Activated CD4-positive, alpha-beta memory T cell treated with anti-CD3 and anti-CD28 coated beads for 36 hours (primary cell): ENCODE measurements at regions of chr10 and their contacts with region 1.

Region 1: DNA sequence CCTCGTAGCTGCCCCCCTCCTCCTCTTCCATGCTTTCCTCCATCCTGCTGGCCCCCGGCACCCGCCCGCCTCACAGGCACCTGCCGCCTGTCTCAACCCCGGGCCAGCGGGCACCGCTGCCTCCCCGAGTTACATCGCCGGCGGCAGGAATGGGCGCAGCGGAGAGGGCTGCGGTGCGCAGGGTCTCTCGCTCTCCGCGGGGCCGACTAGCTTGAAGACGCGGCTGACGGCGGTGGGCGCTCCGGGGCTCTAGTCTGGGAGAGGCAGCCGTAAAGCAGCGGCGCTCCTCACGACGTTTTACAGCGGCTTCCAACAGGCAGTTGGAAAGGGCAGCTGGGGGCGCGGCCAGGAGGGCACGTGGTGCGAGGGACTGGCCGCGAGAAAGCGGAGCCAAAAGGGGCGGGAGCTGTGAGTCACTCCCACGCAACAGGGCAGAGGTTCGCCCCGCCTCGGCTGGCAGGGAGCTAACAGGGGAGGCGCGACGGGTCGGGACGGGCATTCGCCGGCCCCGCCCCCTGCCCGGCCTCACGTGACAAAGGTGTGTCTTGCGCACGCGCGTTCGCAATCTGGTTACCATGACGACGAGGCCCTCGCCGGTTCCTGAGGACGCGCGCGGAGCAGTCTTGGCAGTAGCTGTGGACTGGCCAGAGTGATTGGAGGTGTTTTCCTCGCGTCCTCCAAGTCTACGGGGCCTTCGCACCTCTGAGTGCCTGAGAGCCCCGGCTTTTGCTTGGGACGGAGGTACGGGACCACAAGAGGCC is at the start of gene CACUL1:
- DNase-seq: peak; percentile 100
- H3K4me3 Mint-ChIP-seq: peak within 1 kb of the TSS; percentile 91
- H3K27ac Mint-ChIP-seq: peak within 1 kb of the TSS; percentile 83
- H3K4me1 Mint-ChIP-seq: peaks cover 34% of the 10 kb centered on the region
- H3K27me3 Mint-ChIP-seq: peaks cover 6% of the 10 kb centered on the region
- total RNA-seq, gene CACUL1: 24.0 to 24.4 TPM

Region 2: GRCh38 chr10:118046395-118047156 is 708.3 kb before region 1 on chr10 and contains the start of gene RAB11FIP2:
- CTCF ChIA-PET with region 1: no interaction called
- POLR2A ChIA-PET with region 1: no interaction called
- intact Hi-C with region 1: loop called (anchors 2 kb)
- DNase-seq: peak; percentile 96
- H3K4me3 Mint-ChIP-seq: peak within 1 kb of the TSS; percentile 89
- H3K27ac Mint-ChIP-seq: peak within 1 kb of the TSS; percentile 56
- H3K4me1 Mint-ChIP-seq: peaks cover 36% of the 10 kb centered on the region
- H3K27me3 Mint-ChIP-seq: no peaks in the 10 kb centered on the region
- total RNA-seq, gene RAB11FIP2: 7.5 to 9.4 TPM

Region 3: DNA sequence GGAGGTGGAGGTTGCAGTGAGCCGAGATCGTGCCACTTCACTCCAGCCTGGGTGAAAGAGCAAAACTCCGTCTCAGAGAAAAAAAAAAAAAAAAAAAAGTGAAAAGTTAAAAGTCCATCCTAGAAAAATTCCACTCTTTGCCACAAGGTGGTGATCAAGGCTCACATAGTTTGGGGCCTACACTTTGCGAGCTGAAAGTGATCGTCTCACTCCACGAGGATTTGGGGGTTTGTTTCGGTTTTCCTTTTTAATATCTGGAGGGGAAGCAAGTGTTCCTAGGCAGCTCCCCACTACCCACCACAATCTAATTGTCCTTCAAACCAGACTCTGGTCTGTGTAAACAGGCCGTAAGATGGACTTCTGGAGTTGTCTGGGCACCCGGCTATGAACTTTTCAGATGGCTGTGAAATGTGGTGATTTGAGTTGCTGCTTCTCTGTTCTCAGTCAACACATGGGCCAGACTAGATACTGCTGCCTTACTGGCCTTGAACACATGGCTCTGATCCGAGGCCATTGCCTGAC is 186.5 kb before region 1 on chr10:
- CTCF ChIA-PET with region 1: interaction called, 10 read pairs
- POLR2A ChIA-PET with region 1: no interaction called
- intact Hi-C with region 1: no loop called
- DNase-seq: peak; percentile 45
- H3K4me3 Mint-ChIP-seq: no peak overlapping the region
- H3K27ac Mint-ChIP-seq: no peak overlapping the region
- H3K4me1 Mint-ChIP-seq: peaks cover 2% of the 10 kb centered on the region
- H3K27me3 Mint-ChIP-seq: no peaks in the 10 kb centered on the region

Region 4: GRCh38 chr10:118729641-118730258 is 25.1 kb before region 1 on chr10:
- CTCF ChIA-PET with region 1: interaction called, 10 read pairs
- POLR2A ChIA-PET with region 1: no interaction called
- intact Hi-C with region 1: loop called (anchors 1 kb)
- DNase-seq: no peak
- H3K4me3 Mint-ChIP-seq: no peak overlapping the region
- H3K27ac Mint-ChIP-seq: peak overlapping the region; percentile 23
- H3K4me1 Mint-ChIP-seq: peaks cover 52% of the 10 kb centered on the region
- H3K27me3 Mint-ChIP-seq: no peaks in the 10 kb centered on the region

Region 5: DNA sequence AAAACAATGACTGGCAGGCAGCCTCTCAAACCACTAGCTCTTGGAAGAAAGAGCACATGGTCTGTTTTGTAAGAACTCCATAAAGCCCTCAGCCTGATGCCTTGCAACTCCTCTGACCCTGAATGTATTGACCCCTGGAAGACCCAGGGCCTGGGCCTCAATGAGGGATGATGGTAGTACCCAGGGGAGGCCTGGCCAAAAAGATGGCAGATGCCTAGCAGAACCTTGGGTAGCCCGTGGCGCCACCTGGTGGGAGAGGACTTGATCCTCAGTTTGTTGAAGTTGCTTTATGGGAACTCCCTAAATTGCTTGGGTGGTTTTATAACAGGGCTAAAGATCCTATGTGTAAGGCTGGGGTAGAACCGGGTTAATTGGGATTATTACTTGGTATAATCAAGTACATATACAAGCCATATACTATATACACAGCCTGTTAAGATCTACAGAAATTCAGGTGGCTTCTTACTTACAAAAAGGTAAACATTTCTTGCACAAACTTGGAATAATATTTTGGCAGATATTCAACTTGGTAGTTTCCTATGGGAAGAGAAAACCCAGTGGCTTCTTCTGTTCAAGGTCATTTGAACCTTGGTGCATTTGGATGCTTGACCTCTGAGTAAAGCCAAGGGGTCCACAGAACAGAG is 95.6 kb after region 1 on chr10:
- CTCF ChIA-PET with region 1: no interaction called
- POLR2A ChIA-PET with region 1: no interaction called
- intact Hi-C with region 1: no loop called
- DNase-seq: peak; percentile 88
- H3K4me3 Mint-ChIP-seq: no peak overlapping the region
- H3K27ac Mint-ChIP-seq: no peak overlapping the region
- H3K4me1 Mint-ChIP-seq: no peaks in the 10 kb centered on the region
- H3K27me3 Mint-ChIP-seq: peaks cover 2% of the 10 kb centered on the region

Region 6: DNA sequence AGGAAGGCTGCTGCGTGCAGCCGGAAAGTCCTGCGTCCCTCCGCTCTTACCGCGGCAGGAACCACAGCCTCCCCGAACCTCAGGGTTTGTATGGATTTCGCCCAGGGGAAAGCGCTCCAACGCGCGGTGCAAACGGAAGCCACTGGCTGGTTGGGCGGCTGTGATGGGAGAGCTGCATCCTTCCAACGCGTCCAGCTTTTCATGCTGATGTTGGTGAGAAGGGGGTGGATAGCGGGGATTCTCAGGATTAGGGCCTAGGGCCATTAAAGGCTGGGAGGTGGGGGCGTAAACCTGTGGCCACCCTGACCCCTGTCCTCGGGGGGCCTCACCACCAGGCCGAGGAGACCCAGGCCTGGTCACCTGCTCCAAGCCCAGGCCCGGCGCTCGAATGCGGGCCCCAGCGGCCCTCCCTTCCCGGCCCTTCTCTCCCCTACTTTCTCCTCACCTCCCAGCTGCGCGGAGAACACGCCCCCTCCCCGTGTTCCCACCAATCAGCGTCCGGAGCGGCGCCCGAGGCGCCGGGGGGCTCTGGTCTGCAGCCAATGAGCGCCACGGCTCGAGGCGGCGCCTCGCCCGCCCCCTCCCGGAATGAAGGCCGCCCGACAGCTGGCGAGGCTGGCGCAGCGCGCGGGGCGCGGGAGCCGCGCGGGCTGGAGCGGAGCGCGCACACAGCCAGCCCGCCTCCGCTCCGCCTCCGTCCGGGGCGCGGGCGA is 274.2 kb after region 1 on chr10:
- CTCF ChIA-PET with region 1: no interaction called
- POLR2A ChIA-PET with region 1: interaction called, 5 read pairs
- intact Hi-C with region 1: loop called (anchors 10 kb)
- DNase-seq: peak; percentile 84
- H3K4me3 Mint-ChIP-seq: peak overlapping the region; percentile 48
- H3K27ac Mint-ChIP-seq: no peak overlapping the region
- H3K4me1 Mint-ChIP-seq: peaks cover 15% of the 10 kb centered on the region
- H3K27me3 Mint-ChIP-seq: no peaks in the 10 kb centered on the region

Region 7: DNA sequence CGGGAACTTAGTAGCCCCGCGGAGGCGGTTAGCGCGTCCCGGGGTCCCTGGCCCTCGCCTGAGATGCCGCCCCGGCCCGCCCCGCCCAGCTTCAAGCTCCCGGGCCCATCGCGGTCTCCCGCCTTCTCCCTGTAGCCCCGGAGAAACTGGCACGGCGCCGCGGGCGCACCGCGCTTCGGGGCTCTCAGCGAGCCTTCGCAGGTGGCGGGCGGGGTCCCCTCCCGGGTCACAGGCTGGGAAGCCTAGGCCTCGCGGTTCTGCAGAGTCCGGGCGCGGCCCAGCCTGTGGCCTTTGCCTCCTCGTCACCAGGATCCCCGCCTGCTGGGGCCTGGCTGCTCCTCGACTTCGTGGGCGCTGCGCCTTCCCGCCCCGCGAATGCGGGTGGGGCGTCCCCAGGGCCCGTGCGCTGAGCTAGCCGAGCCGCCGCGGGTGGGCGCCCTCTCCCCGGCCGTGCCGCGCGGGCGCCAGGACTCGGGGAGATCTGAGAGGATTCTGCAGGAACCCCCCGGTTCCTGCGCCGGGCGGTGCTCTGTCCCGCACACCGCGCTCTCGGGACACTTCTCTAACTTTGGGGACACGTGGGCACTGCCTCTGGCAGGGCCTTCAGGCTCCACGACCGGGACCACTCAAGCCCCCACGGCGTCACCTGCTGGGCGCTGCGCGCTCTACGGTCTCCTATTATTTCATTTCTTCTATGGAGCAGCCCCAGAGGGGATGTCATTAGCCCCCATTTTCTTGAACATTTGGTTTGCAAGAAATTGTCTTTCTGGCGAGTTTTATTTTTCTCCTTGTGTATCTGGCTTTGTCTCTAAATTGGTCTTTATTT is 788.3 kb after region 1 on chr10:
- CTCF ChIA-PET with region 1: no interaction called
- POLR2A ChIA-PET with region 1: interaction called, 4 read pairs
- intact Hi-C with region 1: loop called (anchors 5 kb)
- DNase-seq: peak; percentile 79
- H3K4me3 Mint-ChIP-seq: peak overlapping the region; percentile 81
- H3K27ac Mint-ChIP-seq: peak overlapping the region; percentile 87
- H3K4me1 Mint-ChIP-seq: peaks cover 33% of the 10 kb centered on the region
- H3K27me3 Mint-ChIP-seq: no peaks in the 10 kb centered on the region